Left ventricle myocardium inferior (tissue), 1 donor: ENCODE measurements at regions of chr17 and their contacts with region 1.

Region 1: GRCh38 chr17:49315551-49316257 is 46.3 kb downstream of the ZNF652 start:
- DNase-seq: peak; percentile 52
- H3K4me3 ChIP-seq: no peak overlapping the region
- H3K27ac ChIP-seq: peak overlapping the region; percentile 3
- H3K4me1 ChIP-seq: peaks cover 12% of the 10 kb centered on the region
- H3K27me3 ChIP-seq: no peaks in the 10 kb centered on the region
- CTCF ChIP-seq: peak; percentile 91

Region 2: GRCh38 chr17:49390548-49391324 is 75.0 kb after region 1 on chr17:
- intact Hi-C with region 1: loop called (anchors 1 kb)
- DNase-seq: no peak
- H3K4me3 ChIP-seq: no peak overlapping the region
- H3K27ac ChIP-seq: peak overlapping the region; percentile 58
- H3K4me1 ChIP-seq: peaks cover 10% of the 10 kb centered on the region
- H3K27me3 ChIP-seq: no peaks in the 10 kb centered on the region
- CTCF ChIP-seq: no peak

Region 3: DNA sequence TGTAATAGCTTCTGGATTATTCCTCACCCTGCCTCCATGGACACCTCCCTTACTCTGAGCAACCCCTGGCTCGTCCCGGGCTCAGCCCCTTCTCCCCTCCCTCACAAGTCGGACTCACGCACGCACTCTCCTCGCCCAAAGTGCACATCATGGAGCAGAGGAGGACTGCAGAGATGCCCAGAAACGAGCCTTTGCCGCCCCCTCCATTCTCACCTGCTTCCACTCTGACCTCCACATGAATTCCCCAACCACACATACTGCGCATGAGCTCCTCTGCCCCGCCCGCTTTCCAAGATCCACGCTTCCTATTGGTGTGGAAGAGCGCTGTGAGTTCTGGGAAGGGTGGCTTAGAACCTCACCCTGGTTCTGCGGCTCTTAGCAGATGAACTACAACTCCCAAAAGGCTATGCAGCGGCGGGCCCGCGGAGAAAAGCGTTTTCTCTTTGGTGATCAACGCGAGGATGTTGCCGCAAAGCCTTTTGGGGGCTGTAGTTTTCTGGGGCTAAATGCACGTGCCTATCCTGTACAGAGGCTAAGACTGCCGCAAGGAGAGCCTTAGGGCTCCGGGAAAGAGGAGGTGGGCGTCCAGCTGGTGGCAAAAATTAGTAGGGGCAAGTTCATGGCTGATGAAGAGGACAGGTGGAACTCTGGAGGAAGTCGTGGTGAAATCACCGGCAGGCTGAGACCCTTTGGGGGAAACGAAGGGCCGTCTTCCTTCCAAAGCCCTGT is 99.1 kb after region 1 on chr17 and contains the start of gene PHB1:
- intact Hi-C with region 1: loop called (anchors 5 kb)
- DNase-seq: peak; percentile 95
- H3K4me3 ChIP-seq: peak within 1 kb of the TSS; percentile 88
- H3K27ac ChIP-seq: peak within 1 kb of the TSS; percentile 78
- H3K4me1 ChIP-seq: peaks cover 21% of the 10 kb centered on the region
- H3K27me3 ChIP-seq: no peaks in the 10 kb centered on the region
- CTCF ChIP-seq: no peak
- total RNA-seq, gene PHB1: 217 TPM